ENCODE measurements at regions of chr5 and their contacts with region 1.

Region 1: GRCh38 chr5:122882837-122883236 is 37.4 kb downstream of the SNX24 start:
- DNase-seq: peak; percentile 38
- H3K4me3 Mint-ChIP-seq: no peak overlapping the region
- H3K27ac Mint-ChIP-seq: no peak overlapping the region
- H3K4me1 Mint-ChIP-seq: peaks cover 5% of the 10 kb centered on the region
- H3K27me3 Mint-ChIP-seq: no peaks in the 10 kb centered on the region

Region 2: DNA sequence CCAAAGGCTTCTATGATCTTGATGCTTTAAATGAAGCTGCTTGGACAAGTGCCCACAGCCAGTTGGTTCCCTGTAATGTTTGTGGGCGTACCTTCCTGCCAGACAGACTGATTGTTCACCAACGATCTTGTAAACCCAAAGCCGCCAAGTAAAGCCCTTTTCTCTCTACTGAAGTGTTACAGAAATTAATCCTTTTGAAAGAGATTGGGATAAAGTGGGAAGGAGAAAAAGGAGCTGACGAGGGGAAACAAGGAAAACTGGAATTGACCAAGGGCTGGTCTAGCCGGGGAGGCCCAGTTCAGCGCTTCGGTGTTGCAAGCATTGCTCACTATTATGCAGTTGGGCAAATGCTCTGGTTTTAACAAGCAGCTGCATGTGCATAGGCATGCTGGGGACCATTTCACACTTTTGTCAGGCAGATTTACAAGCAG is 700.3 kb before region 1 on chr5:
- CTCF ChIA-PET with region 1: no interaction called
- POLR2A ChIA-PET with region 1: no interaction called
- intact Hi-C with region 1: loop called (anchors 5 kb)
- DNase-seq: no peak
- H3K4me3 Mint-ChIP-seq: no peak overlapping the region
- H3K27ac Mint-ChIP-seq: no peak overlapping the region
- H3K4me1 Mint-ChIP-seq: peaks cover 7% of the 10 kb centered on the region
- H3K27me3 Mint-ChIP-seq: peaks cover 10% of the 10 kb centered on the region

Region 3: GRCh38 chr5:122831984-122832383 is 50.9 kb before region 1 on chr5:
- CTCF ChIA-PET with region 1: no interaction called
- POLR2A ChIA-PET with region 1: no interaction called
- intact Hi-C with region 1: no loop called
- DNase-seq: no peak
- H3K4me3 Mint-ChIP-seq: no peak overlapping the region
- H3K27ac Mint-ChIP-seq: no peak overlapping the region
- H3K4me1 Mint-ChIP-seq: no peaks in the 10 kb centered on the region
- H3K27me3 Mint-ChIP-seq: no peaks in the 10 kb centered on the region

Region 4: GRCh38 chr5:122845229-122846050 is 37.4 kb before region 1 on chr5 and contains the start of gene SNX24:
- CTCF ChIA-PET with region 1: no interaction called
- POLR2A ChIA-PET with region 1: no interaction called
- intact Hi-C with region 1: loop called (anchors 1 kb)
- DNase-seq: peak; percentile 83
- H3K4me3 Mint-ChIP-seq: peak within 1 kb of the TSS; percentile 81
- H3K27ac Mint-ChIP-seq: peak within 1 kb of the TSS; percentile 28
- H3K4me1 Mint-ChIP-seq: peaks cover 24% of the 10 kb centered on the region
- H3K27me3 Mint-ChIP-seq: no peaks in the 10 kb centered on the region
- total RNA-seq, gene SNX24: 6.4 to 7.5 TPM

Region 5: DNA sequence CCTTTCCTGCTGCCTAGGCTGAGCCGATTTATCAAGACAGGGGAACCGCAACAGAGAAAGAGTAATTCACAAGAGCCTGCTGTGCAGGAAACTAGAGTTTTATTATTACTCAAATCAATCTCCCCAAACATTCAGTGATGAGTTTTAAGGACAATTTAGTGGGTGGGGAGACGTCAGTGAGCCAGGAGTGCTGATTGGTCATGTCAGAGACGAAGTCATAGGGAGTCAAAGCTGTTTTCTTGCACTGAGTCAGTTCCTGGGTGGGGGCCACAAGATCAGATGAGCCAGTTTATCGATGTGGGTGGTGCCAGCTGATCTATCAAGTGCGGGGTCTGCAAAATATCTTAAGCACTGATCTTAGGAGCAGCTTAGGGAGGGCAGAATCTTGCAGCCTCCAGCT is 18.4 kb before region 1 on chr5:
- CTCF ChIA-PET with region 1: no interaction called
- POLR2A ChIA-PET with region 1: interaction called, 6 read pairs
- intact Hi-C with region 1: loop called (anchors 1 kb)
- DNase-seq: peak; percentile 73
- H3K4me3 Mint-ChIP-seq: peak overlapping the region; percentile 14
- H3K27ac Mint-ChIP-seq: peak overlapping the region; percentile 72
- H3K4me1 Mint-ChIP-seq: peaks cover 16% of the 10 kb centered on the region
- H3K27me3 Mint-ChIP-seq: no peaks in the 10 kb centered on the region

Measured in activated CD4-positive, alpha-beta memory T cell treated with anti-CD3 and anti-CD28 coated beads for 36 hours (primary cell).